ENCODE measurements at regions of chr2 and their contacts with region 1.

Region 1: GRCh38 chr2:229921892-229922445 is at the start of gene TRIP12:
- DNase-seq: peak; percentile 91
- H3K4me3 Mint-ChIP-seq: peak within 1 kb of the TSS; percentile 90
- H3K27ac Mint-ChIP-seq: peak within 1 kb of the TSS; percentile 99
- H3K4me1 Mint-ChIP-seq: peaks cover 34% of the 10 kb centered on the region
- H3K27me3 Mint-ChIP-seq: no peaks in the 10 kb centered on the region
- total RNA-seq, gene TRIP12: 188 to 190 TPM

Region 2: DNA sequence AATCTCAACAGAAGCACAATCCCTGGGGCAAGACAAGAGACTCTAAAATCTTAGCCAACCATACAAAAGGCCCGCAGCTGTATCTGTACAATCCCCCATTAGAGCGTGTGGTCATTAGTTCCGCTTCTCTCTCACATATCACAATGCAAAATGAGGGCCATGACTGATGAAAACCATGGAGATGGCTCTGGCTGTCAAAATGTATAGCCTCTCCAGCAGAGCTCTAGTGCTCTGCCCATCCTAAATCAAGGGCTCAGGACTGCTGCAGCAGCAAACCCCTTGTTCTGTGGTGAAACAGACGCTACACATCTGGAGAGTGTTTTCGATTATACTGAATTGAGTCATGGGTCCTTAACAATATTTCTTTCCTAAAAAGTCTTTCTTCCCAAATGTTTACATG is 871.8 kb before region 1 on chr2:
- CTCF ChIA-PET with region 1: no interaction called
- intact Hi-C with region 1: no loop called
- DNase-seq: no peak
- H3K4me3 Mint-ChIP-seq: no peak overlapping the region
- H3K27ac Mint-ChIP-seq: no peak overlapping the region
- H3K4me1 Mint-ChIP-seq: no peaks in the 10 kb centered on the region
- H3K27me3 Mint-ChIP-seq: no peaks in the 10 kb centered on the region

Region 3: DNA sequence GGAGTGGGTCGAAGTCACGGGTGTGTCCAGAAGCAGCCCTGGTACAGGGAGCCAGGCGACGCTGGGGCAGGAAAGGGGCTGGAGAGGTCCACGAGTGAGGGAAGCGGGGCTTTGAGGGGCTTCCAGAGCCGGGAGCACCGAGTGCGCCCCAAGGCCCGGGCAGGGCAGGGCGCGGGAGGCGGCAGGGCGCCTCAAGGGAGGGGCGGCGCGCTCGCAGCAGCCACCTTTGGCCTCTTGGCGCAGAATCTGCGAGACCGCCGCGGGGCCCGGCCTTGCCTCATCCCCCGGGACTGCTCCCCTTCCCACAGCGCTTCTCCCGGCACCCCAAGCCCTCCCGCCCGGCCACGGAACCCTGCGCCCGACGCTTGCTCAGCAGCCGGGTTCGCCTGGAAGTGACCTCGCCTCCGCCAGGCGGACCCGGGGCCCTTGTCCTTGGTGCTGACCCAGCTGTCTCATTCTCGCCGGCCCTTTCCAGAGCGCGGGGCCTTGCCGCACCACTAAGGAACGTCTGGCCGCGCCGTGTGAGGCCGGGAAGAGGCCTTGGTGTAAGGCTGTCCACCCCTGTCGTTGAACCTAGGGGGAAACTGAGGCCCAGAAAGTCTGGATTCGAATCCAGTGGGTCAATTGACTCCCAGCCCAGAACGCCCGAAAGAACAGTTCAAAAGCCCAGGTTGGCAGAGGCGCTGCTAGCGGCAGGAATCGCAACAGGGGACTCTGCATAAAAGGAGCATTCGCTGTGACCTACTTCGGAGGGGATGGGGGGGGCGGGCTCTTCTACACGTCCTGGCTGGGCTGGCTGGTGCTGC is 207.0 kb before region 1 on chr2:
- CTCF ChIA-PET with region 1: no interaction called
- intact Hi-C with region 1: loop called (anchors 2 kb)
- DNase-seq: peak; percentile 52
- H3K4me3 Mint-ChIP-seq: peak overlapping the region; percentile 42
- H3K27ac Mint-ChIP-seq: no peak overlapping the region
- H3K4me1 Mint-ChIP-seq: peaks cover 11% of the 10 kb centered on the region
- H3K27me3 Mint-ChIP-seq: peaks cover 59% of the 10 kb centered on the region

Region 4: GRCh38 chr2:229873123-229873581 is 48.8 kb before region 1 on chr2:
- CTCF ChIA-PET with region 1: no interaction called
- intact Hi-C with region 1: loop called (anchors 2 kb)
- DNase-seq: no peak
- H3K4me3 Mint-ChIP-seq: no peak overlapping the region
- H3K27ac Mint-ChIP-seq: peak overlapping the region; percentile 21
- H3K4me1 Mint-ChIP-seq: peaks cover 49% of the 10 kb centered on the region
- H3K27me3 Mint-ChIP-seq: no peaks in the 10 kb centered on the region

Region 5: GRCh38 chr2:229947544-229947943 is 25.6 kb after region 1 on chr2:
- CTCF ChIA-PET with region 1: no interaction called
- intact Hi-C with region 1: no loop called
- DNase-seq: no peak
- H3K4me3 Mint-ChIP-seq: no peak overlapping the region
- H3K27ac Mint-ChIP-seq: no peak overlapping the region
- H3K4me1 Mint-ChIP-seq: peaks cover 9% of the 10 kb centered on the region
- H3K27me3 Mint-ChIP-seq: no peaks in the 10 kb centered on the region

Region 6: GRCh38 chr2:230225486-230225885 is 303.5 kb after region 1 on chr2 and contains the start of gene SP140:
- CTCF ChIA-PET with region 1: no interaction called
- intact Hi-C with region 1: loop called (anchors 1 kb)
- DNase-seq: peak; percentile 87
- H3K4me3 Mint-ChIP-seq: peak within 1 kb of the TSS; percentile 81
- H3K27ac Mint-ChIP-seq: peak within 1 kb of the TSS; percentile 97
- H3K4me1 Mint-ChIP-seq: peaks cover 62% of the 10 kb centered on the region
- H3K27me3 Mint-ChIP-seq: no peaks in the 10 kb centered on the region
- total RNA-seq, gene SP140: 95.1 to 98.8 TPM

Region 7: GRCh38 chr2:231463698-231464575 is 1542.0 kb after region 1 on chr2 and contains the start of gene NCL:
- CTCF ChIA-PET with region 1: no interaction called
- intact Hi-C with region 1: loop called (anchors 5 kb)
- DNase-seq: peak; percentile 87
- H3K4me3 Mint-ChIP-seq: peak within 1 kb of the TSS; percentile 97
- H3K27ac Mint-ChIP-seq: peak within 1 kb of the TSS; percentile 98
- H3K4me1 Mint-ChIP-seq: peaks cover 46% of the 10 kb centered on the region
- H3K27me3 Mint-ChIP-seq: no peaks in the 10 kb centered on the region
- total RNA-seq, gene NCL: 908 to 911 TPM

Measured in activated naive CD4-positive, alpha-beta T cell treated with anti-CD3 and anti-CD28 coated beads for 36 hours (primary cell).